PC-3 (cell line): ENCODE measurements at regions of chr1 and their contacts with region 1.

Region 1: GRCh38 chr1:158527190-158527815 is 26.9 kb downstream of the OR6Y1 start:
- DNase-seq: peak; percentile 36
- ATAC-seq: 0 out of 2 replicates have a peak, but pooled peaks have one; percentile 27
- H3K4me3 ChIP-seq: no peak overlapping the region
- H3K27ac ChIP-seq: no peak overlapping the region
- H3K4me1 ChIP-seq: no peaks in the 10 kb centered on the region
- H3K27me3 ChIP-seq: peaks cover 25% of the 10 kb centered on the region
- CTCF ChIP-seq: peak; percentile 58

Region 2: DNA sequence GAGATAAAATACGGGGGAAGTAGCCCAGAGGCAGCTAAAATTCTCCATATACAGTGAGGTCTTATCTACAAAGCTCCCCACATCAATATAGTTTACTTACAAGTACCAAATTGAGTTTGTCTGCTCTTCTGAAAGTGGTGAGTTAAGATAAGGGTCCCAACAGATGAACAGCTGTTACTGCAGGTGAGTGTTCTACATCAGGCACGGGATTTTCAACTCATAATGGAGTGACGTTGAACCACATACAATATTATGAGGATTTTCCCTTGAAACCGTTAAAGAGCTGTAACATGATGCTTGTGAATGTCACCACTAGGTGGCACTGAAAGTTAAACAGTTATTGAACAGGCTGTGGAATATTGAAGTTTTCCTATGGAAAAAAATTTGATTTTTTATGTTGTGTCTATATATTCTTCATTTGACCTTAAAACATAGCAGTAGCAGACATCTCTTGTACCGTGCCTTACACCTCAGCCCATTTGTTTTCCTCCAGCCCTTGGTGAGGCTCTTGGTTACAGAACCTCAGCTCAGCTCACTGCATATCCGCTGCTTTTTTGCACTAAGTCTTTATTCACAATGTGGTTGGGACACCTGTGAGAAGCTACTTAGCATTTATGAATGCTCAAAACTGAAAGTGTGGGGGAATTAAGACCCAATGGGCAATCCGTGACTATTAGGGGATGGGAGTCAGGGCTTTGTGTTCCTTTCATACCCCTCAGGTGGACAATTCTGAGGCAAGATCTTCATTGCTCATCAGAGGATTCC is 323.4 kb before region 1 on chr1:
- CTCF ChIA-PET with region 1: no interaction called
- POLR2A ChIA-PET with region 1: no interaction called
- intact Hi-C with region 1: loop called (anchors 5 kb)
- DNase-seq: peak; percentile 80
- ATAC-seq: peak; percentile 97
- H3K4me3 ChIP-seq: no peak overlapping the region
- H3K27ac ChIP-seq: no peak overlapping the region
- H3K4me1 ChIP-seq: no peaks in the 10 kb centered on the region
- H3K27me3 ChIP-seq: peaks cover 28% of the 10 kb centered on the region
- CTCF ChIP-seq: peak; percentile 91